Caco-2 (cell line): ENCODE measurements at regions of chrX and their contacts with region 1.

Region 1: GRCh38 chrX:3037218-3037617 is 4.1 kb upstream of the ARSF start:
- DNase-seq: no peak
- H3K4me3 ChIP-seq: no peak overlapping the region
- H3K4me3 Mint-ChIP-seq: no peak overlapping the region
- H3K27ac Mint-ChIP-seq: no peak overlapping the region
- H3K4me1 ChIP-seq: no peaks in the 10 kb centered on the region
- H3K4me1 Mint-ChIP-seq: no peaks in the 10 kb centered on the region
- H3K27me3 ChIP-seq: no peaks in the 10 kb centered on the region
- H3K27me3 Mint-ChIP-seq: no peaks in the 10 kb centered on the region
- CTCF ChIP-seq: no peak

Region 2: DNA sequence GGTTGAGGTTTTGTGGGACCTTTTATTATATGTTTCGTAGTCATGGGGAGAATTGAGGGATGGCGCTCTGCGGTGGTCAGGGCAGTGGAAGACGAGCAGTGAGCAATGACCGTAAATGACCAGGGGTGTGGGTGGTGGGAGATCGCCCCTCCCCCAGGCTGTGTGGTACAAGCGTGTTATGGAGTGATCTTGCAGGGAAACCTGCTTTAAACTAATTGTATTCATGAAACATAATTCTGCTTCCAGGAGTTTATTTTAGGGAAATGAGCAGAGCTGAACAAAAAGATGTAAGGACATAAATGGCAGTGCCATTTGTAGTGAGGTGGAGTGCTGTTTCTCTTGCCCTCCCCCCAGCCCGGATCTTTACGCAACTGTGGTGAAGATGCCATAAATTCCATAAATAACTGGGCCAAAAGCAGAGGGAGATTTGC is 188.3 kb before region 1 on chrX:
- CTCF ChIA-PET with region 1: no interaction called
- POLR2A ChIA-PET with region 1: no interaction called
- intact Hi-C with region 1: no loop called
- DNase-seq: peak; percentile 49 to 55
- H3K4me3 ChIP-seq: no peak overlapping the region
- H3K4me3 Mint-ChIP-seq: peak overlapping the region; percentile 33
- H3K27ac Mint-ChIP-seq: peak overlapping the region; percentile 90
- H3K4me1 ChIP-seq: peaks cover 12% of the 10 kb centered on the region
- H3K4me1 Mint-ChIP-seq: peaks cover 11% of the 10 kb centered on the region
- H3K27me3 ChIP-seq: no peaks in the 10 kb centered on the region
- H3K27me3 Mint-ChIP-seq: no peaks in the 10 kb centered on the region
- CTCF ChIP-seq: no peak

Region 3: GRCh38 chrX:2875798-2876399 is 161.3 kb before region 1 on chrX:
- CTCF ChIA-PET with region 1: no interaction called
- POLR2A ChIA-PET with region 1: no interaction called
- intact Hi-C with region 1: no loop called
- DNase-seq: no peak
- H3K4me3 ChIP-seq: no peak overlapping the region
- H3K4me3 Mint-ChIP-seq: no peak overlapping the region
- H3K27ac Mint-ChIP-seq: no peak overlapping the region
- H3K4me1 ChIP-seq: no peaks in the 10 kb centered on the region
- H3K4me1 Mint-ChIP-seq: no peaks in the 10 kb centered on the region
- H3K27me3 ChIP-seq: no peaks in the 10 kb centered on the region
- H3K27me3 Mint-ChIP-seq: no peaks in the 10 kb centered on the region
- CTCF ChIP-seq: peak in 1 of 2 experiments; percentile 26

Region 4: GRCh38 chrX:3134316-3134945 is 97.2 kb after region 1 on chrX:
- CTCF ChIA-PET with region 1: no interaction called
- POLR2A ChIA-PET with region 1: no interaction called
- intact Hi-C with region 1: no loop called
- DNase-seq: no peak
- H3K4me3 ChIP-seq: no peak overlapping the region
- H3K4me3 Mint-ChIP-seq: no peak overlapping the region
- H3K27ac Mint-ChIP-seq: no peak overlapping the region
- H3K4me1 ChIP-seq: no peaks in the 10 kb centered on the region
- H3K4me1 Mint-ChIP-seq: no peaks in the 10 kb centered on the region
- H3K27me3 ChIP-seq: no peaks in the 10 kb centered on the region
- H3K27me3 Mint-ChIP-seq: peaks cover 6% of the 10 kb centered on the region
- CTCF ChIP-seq: no peak

Region 5: GRCh38 chrX:3161681-3162080 is 124.5 kb after region 1 on chrX:
- CTCF ChIA-PET with region 1: no interaction called
- POLR2A ChIA-PET with region 1: no interaction called
- intact Hi-C with region 1: no loop called
- DNase-seq: no peak
- H3K4me3 ChIP-seq: no peak overlapping the region
- H3K4me3 Mint-ChIP-seq: no peak overlapping the region
- H3K27ac Mint-ChIP-seq: no peak overlapping the region
- H3K4me1 ChIP-seq: no peaks in the 10 kb centered on the region
- H3K4me1 Mint-ChIP-seq: no peaks in the 10 kb centered on the region
- H3K27me3 ChIP-seq: no peaks in the 10 kb centered on the region
- H3K27me3 Mint-ChIP-seq: peaks cover 7% of the 10 kb centered on the region
- CTCF ChIP-seq: no peak

Region 6: GRCh38 chrX:3548765-3549391 is 511.7 kb after region 1 on chrX:
- CTCF ChIA-PET with region 1: no interaction called
- POLR2A ChIA-PET with region 1: no interaction called
- intact Hi-C with region 1: loop called (anchors 5 kb)
- DNase-seq: no peak
- H3K4me3 ChIP-seq: peak overlapping the region; percentile 2
- H3K4me3 Mint-ChIP-seq: peak overlapping the region; percentile 77
- H3K27ac Mint-ChIP-seq: no peak overlapping the region
- H3K4me1 ChIP-seq: no peaks in the 10 kb centered on the region; the same call in 1 of the 2 replicates
- H3K4me1 Mint-ChIP-seq: peaks cover 11% of the 10 kb centered on the region
- H3K27me3 ChIP-seq: no peaks in the 10 kb centered on the region
- H3K27me3 Mint-ChIP-seq: no peaks in the 10 kb centered on the region
- CTCF ChIP-seq: peak in 1 of 2 experiments; percentile 13

Region 7: GRCh38 chrX:3638280-3638873 is 601.2 kb after region 1 on chrX:
- CTCF ChIA-PET with region 1: no interaction called
- POLR2A ChIA-PET with region 1: no interaction called
- intact Hi-C with region 1: loop called (anchors 5 kb)
- DNase-seq: peak in 1 of 2 experiments; percentile 29
- H3K4me3 ChIP-seq: no peak overlapping the region
- H3K4me3 Mint-ChIP-seq: no peak overlapping the region
- H3K27ac Mint-ChIP-seq: no peak overlapping the region
- H3K4me1 ChIP-seq: no peaks in the 10 kb centered on the region
- H3K4me1 Mint-ChIP-seq: peaks cover 6% of the 10 kb centered on the region
- H3K27me3 ChIP-seq: no peaks in the 10 kb centered on the region
- H3K27me3 Mint-ChIP-seq: no peaks in the 10 kb centered on the region
- CTCF ChIP-seq: peak; percentile 43 to 46